ENCODE measurements at regions of chr9 and their contacts with region 1.

Region 1: DNA sequence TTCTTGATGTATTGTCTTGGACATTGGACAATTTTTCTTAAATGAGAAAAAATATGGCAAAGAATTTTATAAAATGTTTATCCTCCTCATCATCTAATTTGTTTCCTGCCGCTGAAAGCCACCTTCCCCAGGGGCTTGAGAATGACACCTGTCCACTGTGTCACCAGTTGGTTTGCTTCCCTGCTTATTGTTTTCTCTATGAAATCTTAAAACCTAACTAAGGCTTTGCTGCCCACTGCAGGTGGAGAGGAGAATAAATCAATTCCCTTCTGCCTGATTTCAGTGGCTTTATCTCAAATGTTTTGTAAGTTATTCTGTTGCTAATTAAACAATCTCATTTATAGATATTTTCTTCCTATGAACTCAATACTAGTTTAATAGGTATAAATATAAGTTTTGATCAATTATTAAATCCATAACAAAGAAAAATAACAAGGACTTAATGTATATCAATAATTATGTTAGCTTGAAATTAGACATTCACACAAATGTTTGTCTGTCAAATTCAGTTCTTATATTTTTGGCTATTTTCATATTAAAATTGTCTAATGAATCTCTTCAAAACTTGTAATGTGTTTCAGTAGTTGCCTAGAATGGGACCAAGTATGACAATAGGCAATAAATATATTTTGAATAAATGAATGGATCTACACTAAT is 822.5 kb downstream of the PTPRD start:
- DNase-seq: peak; percentile 15
- H3K4me3 ChIP-seq: no peak overlapping the region
- H3K27ac ChIP-seq: no peak overlapping the region
- H3K4me1 ChIP-seq: no peaks in the 10 kb centered on the region
- H3K27me3 ChIP-seq: no peaks in the 10 kb centered on the region
- CTCF ChIP-seq: peak; percentile 44 to 60 (median 52)
- EP300 ChIP-seq: no peak
- POLR2A ChIP-seq: no peak

Region 2: GRCh38 chr9:9603345-9603744 is 187.0 kb before region 1 on chr9:
- in situ Hi-C with region 1: loop called in 1 of 4 experiments (anchors 10 kb)
- intact Hi-C with region 1: no loop called
- DNase-seq: no peak
- H3K4me3 ChIP-seq: no peak overlapping the region
- H3K27ac ChIP-seq: no peak overlapping the region
- H3K4me1 ChIP-seq: no peaks in the 10 kb centered on the region
- H3K27me3 ChIP-seq: no peaks in the 10 kb centered on the region
- CTCF ChIP-seq: no peak
- EP300 ChIP-seq: no peak
- POLR2A ChIP-seq: no peak

Region 3: DNA sequence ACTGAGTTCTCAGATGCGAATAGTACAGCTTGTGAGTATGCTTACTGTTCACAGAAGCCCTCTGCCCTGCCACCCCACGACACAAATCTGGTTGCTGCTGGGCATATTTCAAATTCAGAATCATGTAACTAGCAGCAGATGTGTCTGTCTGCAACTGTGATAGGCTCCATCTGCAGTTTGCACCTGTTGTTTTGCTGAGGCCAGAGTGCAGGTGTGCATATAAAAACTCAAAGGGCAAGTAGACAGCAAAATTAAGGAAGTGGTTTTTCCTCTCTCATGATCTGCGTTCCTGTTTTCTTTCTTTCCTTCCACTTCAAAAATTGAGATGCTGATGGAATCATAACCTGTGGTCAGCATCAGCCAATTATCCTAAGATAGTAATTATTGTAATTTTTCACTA is 178.1 kb before region 1 on chr9:
- in situ Hi-C with region 1: loop called in 2 of 4 experiments (anchors 10 kb)
- intact Hi-C with region 1: no loop called
- DNase-seq: peak; percentile 7
- H3K4me3 ChIP-seq: no peak overlapping the region
- H3K27ac ChIP-seq: no peak overlapping the region
- H3K4me1 ChIP-seq: no peaks in the 10 kb centered on the region
- H3K27me3 ChIP-seq: no peaks in the 10 kb centered on the region
- CTCF ChIP-seq: no peak
- EP300 ChIP-seq: no peak
- POLR2A ChIP-seq: no peak